ENCODE measurements at regions of chr14 and their contacts with region 1.

Region 1: GRCh38 chr14:35292051-35292769 is at the start of gene PSMA6:
- DNase-seq: peak; percentile 98 to 99
- H3K4me3 ChIP-seq: peak within 1 kb of the TSS; percentile 91
- H3K4me3 Mint-ChIP-seq: peak within 1 kb of the TSS; percentile 92
- H3K27ac Mint-ChIP-seq: peak within 1 kb of the TSS; percentile 97
- H3K4me1 ChIP-seq: peaks cover 8% of the 10 kb centered on the region
- H3K4me1 Mint-ChIP-seq: no peaks in the 10 kb centered on the region
- H3K27me3 ChIP-seq: no peaks in the 10 kb centered on the region
- H3K27me3 Mint-ChIP-seq: no peaks in the 10 kb centered on the region
- CTCF ChIP-seq: no peak
- total RNA-seq, gene PSMA6: 246 and 247 TPM in 2 replicates

Region 2: GRCh38 chr14:34956931-34957330 is 335.3 kb before region 1 on chr14:
- CTCF ChIA-PET with region 1: no interaction called
- POLR2A ChIA-PET with region 1: interaction called, 21 read pairs
- intact Hi-C with region 1: no loop called
- DNase-seq: no peak
- H3K4me3 ChIP-seq: no peak overlapping the region
- H3K4me3 Mint-ChIP-seq: no peak overlapping the region
- H3K27ac Mint-ChIP-seq: no peak overlapping the region
- H3K4me1 ChIP-seq: peaks cover 19% of the 10 kb centered on the region
- H3K4me1 Mint-ChIP-seq: peaks cover 16% of the 10 kb centered on the region
- H3K27me3 ChIP-seq: no peaks in the 10 kb centered on the region
- H3K27me3 Mint-ChIP-seq: no peaks in the 10 kb centered on the region
- CTCF ChIP-seq: no peak

Region 3: GRCh38 chr14:35046048-35046741 is 246.0 kb before region 1 on chr14 and contains the start of gene FAM177A1:
- CTCF ChIA-PET with region 1: no interaction called
- POLR2A ChIA-PET with region 1: interaction called, 10 read pairs
- intact Hi-C with region 1: loop called (anchors 2 kb)
- DNase-seq: peak; percentile 97 to 99
- H3K4me3 ChIP-seq: peak within 1 kb of the TSS; percentile 93
- H3K4me3 Mint-ChIP-seq: peak within 1 kb of the TSS; percentile 90
- H3K27ac Mint-ChIP-seq: peak within 1 kb of the TSS; percentile 98
- H3K4me1 ChIP-seq: peaks cover 21% of the 10 kb centered on the region
- H3K4me1 Mint-ChIP-seq: peaks cover 17% of the 10 kb centered on the region
- H3K27me3 ChIP-seq: no peaks in the 10 kb centered on the region
- H3K27me3 Mint-ChIP-seq: no peaks in the 10 kb centered on the region
- CTCF ChIP-seq: no peak
- total RNA-seq, gene FAM177A1: 73.6 and 82.0 TPM in 2 replicates

Region 4: GRCh38 chr14:35121887-35122695 is 170.1 kb before region 1 on chr14 and contains the starts of genes PPP2R3C and PRORP:
- CTCF ChIA-PET with region 1: no interaction called
- POLR2A ChIA-PET with region 1: interaction called, 10 read pairs
- intact Hi-C with region 1: loop called (anchors 10 kb)
- DNase-seq: peak; percentile 95 to 97
- H3K4me3 ChIP-seq: peak within 1 kb of the TSS; percentile 70
- H3K4me3 Mint-ChIP-seq: peak within 1 kb of the TSS; percentile 88
- H3K27ac Mint-ChIP-seq: peak within 1 kb of the TSS; percentile 100
- H3K4me1 ChIP-seq: no peaks in the 10 kb centered on the region
- H3K4me1 Mint-ChIP-seq: peaks cover 38% of the 10 kb centered on the region
- H3K27me3 ChIP-seq: no peaks in the 10 kb centered on the region
- H3K27me3 Mint-ChIP-seq: no peaks in the 10 kb centered on the region
- CTCF ChIP-seq: no peak
- total RNA-seq, gene PPP2R3C: 23.3 and 25.2 TPM in 2 replicates
- total RNA-seq, gene PRORP: 34.5 and 36.3 TPM in 2 replicates

Region 5: DNA sequence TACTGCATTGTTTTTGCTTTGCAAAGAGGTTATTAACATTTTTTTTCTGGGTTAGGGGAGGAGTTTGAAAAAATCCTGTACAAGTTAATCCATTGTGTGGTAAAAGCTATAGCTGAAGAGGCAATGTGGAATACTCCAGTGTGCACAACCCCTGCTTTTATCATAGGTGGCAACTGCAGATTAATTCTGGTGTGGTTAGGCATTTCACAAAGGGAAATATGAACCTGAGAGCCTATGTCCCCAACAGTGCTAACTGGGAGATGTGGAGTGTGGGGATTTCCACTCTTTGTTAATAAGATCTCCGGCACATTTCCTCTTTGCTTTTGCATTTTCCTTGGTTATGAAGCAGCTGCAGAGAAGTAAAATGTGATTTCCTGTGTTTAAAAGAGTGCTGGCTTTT is 136.2 kb before region 1 on chr14:
- CTCF ChIA-PET with region 1: no interaction called
- POLR2A ChIA-PET with region 1: no interaction called
- intact Hi-C with region 1: no loop called
- DNase-seq: no peak
- H3K4me3 ChIP-seq: no peak overlapping the region
- H3K4me3 Mint-ChIP-seq: no peak overlapping the region
- H3K27ac Mint-ChIP-seq: no peak overlapping the region
- H3K4me1 ChIP-seq: peaks cover 33% of the 10 kb centered on the region
- H3K4me1 Mint-ChIP-seq: peaks cover 19% of the 10 kb centered on the region
- H3K27me3 ChIP-seq: no peaks in the 10 kb centered on the region
- H3K27me3 Mint-ChIP-seq: no peaks in the 10 kb centered on the region
- CTCF ChIP-seq: no peak

Region 6: GRCh38 chr14:35229495-35230089 is 62.6 kb before region 1 on chr14:
- CTCF ChIA-PET with region 1: interaction called, 5 read pairs
- POLR2A ChIA-PET with region 1: no interaction called
- intact Hi-C with region 1: loop called (anchors 5 kb)
- DNase-seq: no peak
- H3K4me3 ChIP-seq: no peak overlapping the region
- H3K4me3 Mint-ChIP-seq: no peak overlapping the region
- H3K27ac Mint-ChIP-seq: no peak overlapping the region
- H3K4me1 ChIP-seq: no peaks in the 10 kb centered on the region
- H3K4me1 Mint-ChIP-seq: no peaks in the 10 kb centered on the region
- H3K27me3 ChIP-seq: no peaks in the 10 kb centered on the region
- H3K27me3 Mint-ChIP-seq: no peaks in the 10 kb centered on the region
- CTCF ChIP-seq: peak; percentile 11 to 32

Region 7: GRCh38 chr14:35331605-35332516 is 39.7 kb after region 1 on chr14:
- CTCF ChIA-PET with region 1: no interaction called
- POLR2A ChIA-PET with region 1: interaction called, 4 read pairs
- intact Hi-C with region 1: loop called (anchors 5 kb)
- DNase-seq: peak; percentile 82 to 83
- H3K4me3 ChIP-seq: no peak overlapping the region
- H3K4me3 Mint-ChIP-seq: peak overlapping the region; percentile 52
- H3K27ac Mint-ChIP-seq: peak overlapping the region; percentile 90
- H3K4me1 ChIP-seq: peaks cover 45% of the 10 kb centered on the region
- H3K4me1 Mint-ChIP-seq: peaks cover 26% of the 10 kb centered on the region
- H3K27me3 ChIP-seq: no peaks in the 10 kb centered on the region
- H3K27me3 Mint-ChIP-seq: no peaks in the 10 kb centered on the region
- CTCF ChIP-seq: no peak

Region 8: DNA sequence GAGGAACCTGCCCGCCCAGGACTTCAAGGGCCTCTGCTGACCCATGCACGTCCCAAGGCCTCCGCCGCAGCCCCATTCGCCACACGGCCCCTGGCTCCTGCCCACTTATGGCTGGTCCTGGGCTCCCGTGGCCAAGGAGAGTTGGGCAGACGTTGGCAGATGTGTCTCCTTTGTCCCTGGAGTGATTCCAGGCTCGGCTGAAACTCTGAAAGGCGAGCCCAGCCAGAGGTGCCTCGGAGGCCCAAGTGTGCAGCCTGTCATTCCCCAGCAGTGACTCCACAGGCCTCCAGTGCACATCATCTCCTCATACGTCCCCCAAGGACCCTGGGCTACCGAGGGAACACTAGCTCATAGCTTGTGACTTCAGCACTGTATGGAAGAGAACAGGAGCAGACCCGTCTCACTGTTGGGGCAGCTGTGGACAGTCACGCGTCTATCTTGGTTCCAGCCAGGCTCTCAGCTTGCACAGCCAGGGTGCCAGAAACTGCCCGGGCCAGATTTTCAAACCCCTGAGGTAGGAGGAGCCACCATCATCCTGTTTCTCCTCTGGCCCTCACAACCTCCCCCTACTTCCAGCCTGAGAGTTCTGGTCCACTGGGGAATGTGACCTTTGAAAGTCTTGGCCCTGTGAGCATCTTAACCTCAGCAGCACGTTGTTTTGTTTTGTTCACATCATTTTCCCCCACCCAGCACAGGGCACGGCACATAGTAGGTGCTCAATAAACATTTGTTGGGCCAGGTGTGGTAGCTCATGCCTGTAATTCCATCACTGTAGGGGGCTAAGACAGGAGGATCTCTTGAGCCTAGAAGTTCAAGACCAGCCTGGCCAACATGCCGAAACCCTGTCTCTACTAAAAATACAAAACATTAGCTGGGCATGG is 50.2 kb after region 1 on chr14:
- CTCF ChIA-PET with region 1: no interaction called
- POLR2A ChIA-PET with region 1: no interaction called
- intact Hi-C with region 1: no loop called
- DNase-seq: no peak
- H3K4me3 ChIP-seq: no peak overlapping the region
- H3K4me3 Mint-ChIP-seq: no peak overlapping the region
- H3K27ac Mint-ChIP-seq: no peak overlapping the region
- H3K4me1 ChIP-seq: peaks cover 14% of the 10 kb centered on the region
- H3K4me1 Mint-ChIP-seq: peaks cover 4% of the 10 kb centered on the region
- H3K27me3 ChIP-seq: no peaks in the 10 kb centered on the region
- H3K27me3 Mint-ChIP-seq: no peaks in the 10 kb centered on the region
- CTCF ChIP-seq: no peak